CD8-positive, alpha-beta T cell (primary cell): ENCODE measurements at regions of chr2 and their contacts with region 1.

Region 1: DNA sequence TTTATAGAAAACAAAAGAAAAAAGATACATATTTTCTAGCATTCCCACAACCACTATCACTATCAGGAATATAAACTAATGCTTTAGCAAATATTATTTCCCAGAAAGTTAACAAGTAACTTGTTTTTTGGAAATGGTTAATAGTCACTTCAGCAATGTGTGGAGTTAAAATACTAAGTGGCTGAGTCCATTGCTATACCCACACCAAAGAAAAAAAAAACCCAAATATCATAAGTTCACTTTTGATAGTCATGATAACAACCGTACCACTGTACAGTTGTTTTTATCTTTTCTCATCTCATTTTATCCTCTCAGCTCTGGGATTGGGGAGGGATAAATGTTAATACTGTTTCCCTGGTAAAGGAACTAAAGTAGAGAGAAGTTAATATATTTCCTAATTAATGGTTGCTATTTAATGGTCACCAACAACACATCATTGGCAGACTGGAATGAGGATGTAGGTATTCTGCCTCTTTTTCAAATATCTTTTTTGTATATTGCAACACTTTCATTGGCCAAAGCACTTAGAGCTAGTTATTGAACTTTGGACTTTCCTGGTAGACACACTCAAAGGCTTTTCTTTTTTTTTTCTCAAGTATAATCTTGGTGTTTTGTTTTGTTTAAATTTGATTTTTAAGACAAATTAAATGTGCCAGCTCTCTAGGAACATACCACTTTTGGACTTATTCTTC is 18.4 kb upstream of the KANSL1L start:
- DNase-seq: no peak
- ATAC-seq: no peak
- H3K4me3 ChIP-seq: no peak overlapping the region
- H3K4me3 Mint-ChIP-seq: no peak overlapping the region
- H3K27ac ChIP-seq: no peak overlapping the region
- H3K27ac Mint-ChIP-seq: no peak overlapping the region
- H3K4me1 ChIP-seq: no peaks in the 10 kb centered on the region
- H3K4me1 Mint-ChIP-seq: peaks cover 2% of the 10 kb centered on the region
- H3K27me3 ChIP-seq: no peaks in the 10 kb centered on the region
- H3K27me3 Mint-ChIP-seq: no peaks in the 10 kb centered on the region
- CTCF ChIP-seq: no peak

Region 2: GRCh38 chr2:210158236-210158635 is 31.4 kb before region 1 on chr2:
- CTCF ChIA-PET with region 1: interaction called, 6 read pairs
- POLR2A ChIA-PET with region 1: no interaction called
- intact Hi-C with region 1: loop called in 1 of 2 experiments (anchors 5 kb)
- DNase-seq: no peak
- ATAC-seq: no peak
- H3K4me3 ChIP-seq: no peak overlapping the region
- H3K4me3 Mint-ChIP-seq: no peak overlapping the region
- H3K27ac ChIP-seq: no peak overlapping the region
- H3K27ac Mint-ChIP-seq: no peak overlapping the region
- H3K4me1 ChIP-seq: no peaks in the 10 kb centered on the region
- H3K4me1 Mint-ChIP-seq: peaks cover 17% of the 10 kb centered on the region
- H3K27me3 ChIP-seq: no peaks in the 10 kb centered on the region
- H3K27me3 Mint-ChIP-seq: peaks cover 2% of the 10 kb centered on the region
- CTCF ChIP-seq: no peak